CD8-positive, alpha-beta memory T cell (primary cell): ENCODE measurements at regions of chr4 and their contacts with region 1.

Region 1: GRCh38 chr4:121800961-121801714 is at the start of gene EXOSC9:
- DNase-seq: peak; percentile 89 to 95 (median 93)
- H3K4me3 ChIP-seq: peak within 1 kb of the TSS; percentile 100
- H3K4me3 Mint-ChIP-seq: peak within 1 kb of the TSS; percentile 94 to 98 (median 97)
- H3K27ac ChIP-seq: peak within 1 kb of the TSS; percentile 95
- H3K27ac Mint-ChIP-seq: peak within 1 kb of the TSS; percentile 97 to 100 (median 98)
- H3K4me1 ChIP-seq: peaks cover 31% of the 10 kb centered on the region
- H3K4me1 Mint-ChIP-seq: peaks cover 45 to 64% (median 56%) of the 10 kb centered on the region in 3 donors
- H3K27me3 ChIP-seq: no peaks in the 10 kb centered on the region
- H3K27me3 Mint-ChIP-seq: peaks cover 0 to 3% of the 10 kb centered on the region in 2 donors
- total RNA-seq, gene EXOSC9: 72.2 to 72.9 TPM

Region 2: DNA sequence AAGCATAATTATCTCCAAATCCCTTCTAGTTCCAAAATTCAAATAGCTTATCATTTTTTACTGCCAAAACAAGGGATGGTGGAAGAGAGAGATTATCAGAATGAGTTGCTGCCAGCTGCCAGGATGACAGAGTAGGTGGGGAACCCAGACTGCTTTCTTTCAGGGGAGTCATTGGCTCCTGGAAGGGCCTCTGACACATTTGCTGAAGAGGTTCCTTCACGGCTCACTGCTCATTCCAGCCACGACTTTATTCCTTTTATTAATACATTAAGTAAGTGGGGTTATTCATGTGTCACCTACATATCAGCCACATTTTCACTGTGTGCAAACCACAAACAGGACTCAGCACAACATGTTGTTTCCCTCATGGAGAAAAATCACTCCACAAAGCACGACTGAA is 23.5 kb before region 1 on chr4:
- CTCF ChIA-PET with region 1: no interaction called
- POLR2A ChIA-PET with region 1: no interaction called
- DNase-seq: no peak
- H3K4me3 ChIP-seq: no peak overlapping the region
- H3K4me3 Mint-ChIP-seq: no peak overlapping the region
- H3K27ac ChIP-seq: no peak overlapping the region
- H3K27ac Mint-ChIP-seq: peak overlapping the region in 5 of 8 donors; percentile 2 to 42 (median 34)
- H3K4me1 ChIP-seq: no peaks in the 10 kb centered on the region
- H3K4me1 Mint-ChIP-seq: peaks cover 12 to 20% (median 19%) of the 10 kb centered on the region in 3 donors
- H3K27me3 ChIP-seq: no peaks in the 10 kb centered on the region
- H3K27me3 Mint-ChIP-seq: peaks cover 5 to 13% of the 10 kb centered on the region in 2 donors

Region 3: DNA sequence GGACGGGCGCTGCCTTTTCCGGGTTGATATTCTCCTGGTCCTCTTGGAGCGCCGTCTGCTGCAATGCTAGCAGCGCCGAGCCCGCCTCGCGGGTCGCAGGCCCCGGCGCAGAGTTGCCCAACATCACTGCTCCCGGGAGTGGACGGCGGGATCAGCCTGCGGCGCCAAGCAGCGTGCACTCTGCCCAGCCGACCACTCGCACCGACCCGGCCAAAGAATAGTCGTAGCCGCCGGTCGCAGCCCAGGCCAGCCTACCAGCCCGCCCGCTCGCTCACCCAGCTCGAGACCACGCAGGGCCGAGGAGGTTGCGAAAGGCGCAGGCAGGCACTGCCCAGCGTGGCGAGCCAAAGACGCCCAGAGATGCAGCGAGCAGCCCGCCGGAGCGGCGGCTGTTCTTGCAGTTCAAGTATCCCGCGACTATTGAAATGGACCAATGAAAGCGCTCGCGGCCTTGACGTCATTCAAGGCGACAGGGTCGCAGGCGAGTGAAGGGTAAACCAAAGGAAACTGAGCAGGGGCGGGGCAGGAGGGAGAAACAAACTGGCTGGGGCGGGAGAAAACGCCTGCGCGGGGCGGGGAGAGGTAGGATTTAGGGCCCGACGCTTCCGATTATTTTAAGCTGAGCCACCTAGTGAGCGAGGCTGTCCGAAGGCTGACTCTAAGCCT is 22.5 kb after region 1 on chr4 and contains the start of gene CCNA2:
- CTCF ChIA-PET with region 1: interaction called, 7 read pairs
- POLR2A ChIA-PET with region 1: interaction called, 10 read pairs
- DNase-seq: peak; percentile 91 to 96 (median 93)
- H3K4me3 ChIP-seq: peak within 1 kb of the TSS; percentile 83
- H3K4me3 Mint-ChIP-seq: peak within 1 kb of the TSS; percentile 79 to 95 (median 93)
- H3K27ac ChIP-seq: peak within 1 kb of the TSS; percentile 57
- H3K27ac Mint-ChIP-seq: peak within 1 kb of the TSS; percentile 22 to 95 (median 90)
- H3K4me1 ChIP-seq: peaks cover 5% of the 10 kb centered on the region
- H3K4me1 Mint-ChIP-seq: peaks cover 17 to 38% (median 26%) of the 10 kb centered on the region in 3 donors
- H3K27me3 ChIP-seq: no peaks in the 10 kb centered on the region
- H3K27me3 Mint-ChIP-seq: peaks cover 0 to 2% of the 10 kb centered on the region in 2 donors
- total RNA-seq, gene CCNA2: 72.1 to 73.5 TPM